ENCODE measurements at regions of chr1 and their contacts with region 1.

Region 1: GRCh38 chr1:231419738-231420298 is 2.3 kb downstream of the EGLN1 start:
- DNase-seq: no peak

Region 2: DNA sequence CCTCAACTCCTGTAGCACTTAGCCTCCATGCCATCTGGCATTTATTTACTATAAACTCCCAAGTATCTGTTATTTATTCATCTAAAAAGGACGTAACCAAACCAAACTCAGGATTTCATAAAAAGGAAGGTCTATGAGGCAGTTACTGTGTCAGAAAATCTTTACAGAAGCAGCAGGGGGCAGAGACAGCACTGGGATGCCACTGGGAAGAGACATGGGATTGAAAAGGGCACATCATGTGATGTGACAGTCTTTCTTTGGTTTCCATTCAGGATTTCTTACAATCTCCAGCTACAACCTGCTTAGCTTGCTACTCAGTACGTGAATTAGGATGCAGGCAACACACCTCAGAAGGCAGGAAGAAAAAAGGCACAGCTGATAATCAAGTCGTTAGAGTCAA is 50.5 kb before region 1 on chr1:
- intact Hi-C with region 1: loop called in 1 of 2 experiments (anchors 10 kb)
- DNase-seq: no peak

Region 3: DNA sequence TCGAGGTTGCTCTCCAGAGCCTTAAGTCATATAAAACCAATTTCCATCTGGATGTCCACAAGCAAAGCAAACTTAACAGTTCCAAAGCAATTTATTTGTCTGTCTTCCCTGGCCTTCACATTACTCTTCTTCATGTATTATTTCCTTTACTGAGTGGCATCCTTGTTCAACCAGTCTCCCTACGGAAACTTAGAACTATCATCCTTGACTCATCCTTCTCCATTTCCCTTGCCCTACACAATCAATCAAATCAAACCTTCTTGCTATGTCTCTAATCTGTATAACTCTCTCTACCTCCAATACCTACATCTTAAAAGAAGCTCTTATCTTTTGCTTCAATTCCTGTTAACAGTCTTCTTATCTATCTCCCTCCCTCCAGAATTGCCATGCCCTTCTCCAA is 23.2 kb before region 1 on chr1:
- intact Hi-C with region 1: loop called in 1 of 2 experiments (anchors 1 kb)
- DNase-seq: no peak

Measured in posterior vena cava (tissue), 2 donors.